MCF 10A (cell line): ENCODE measurements at regions of chr5 and their contacts with region 1.

Region 1: GRCh38 chr5:149128023-149128875 is 13.0 kb upstream of the ABLIM3 start:
- DNase-seq: peak; percentile 80
- H3K4me3 Mint-ChIP-seq: peak overlapping the region; percentile 67
- H3K27ac Mint-ChIP-seq: peak overlapping the region; percentile 84
- H3K4me1 Mint-ChIP-seq: peaks cover 73% of the 10 kb centered on the region
- H3K27me3 Mint-ChIP-seq: no peaks in the 10 kb centered on the region
- CTCF ChIP-seq: peak; percentile 87

Region 2: GRCh38 chr5:148979104-148979723 is 149.0 kb before region 1 on chr5:
- CTCF ChIA-PET with region 1: interaction called, 6 read pairs
- POLR2A ChIA-PET with region 1: interaction called, 10 read pairs
- intact Hi-C with region 1: no loop called
- DNase-seq: peak; percentile 95
- H3K4me3 Mint-ChIP-seq: peak overlapping the region; percentile 59
- H3K27ac Mint-ChIP-seq: peak overlapping the region; percentile 97
- H3K4me1 Mint-ChIP-seq: peaks cover 70% of the 10 kb centered on the region
- H3K27me3 Mint-ChIP-seq: no peaks in the 10 kb centered on the region
- CTCF ChIP-seq: no peak

Region 3: GRCh38 chr5:149063017-149063687 is 65.1 kb before region 1 on chr5 and contains the start of gene SH3TC2:
- CTCF ChIA-PET with region 1: interaction called, 11 read pairs
- POLR2A ChIA-PET with region 1: interaction called, 4 read pairs
- intact Hi-C with region 1: no loop called
- DNase-seq: peak; percentile 60
- H3K4me3 Mint-ChIP-seq: peak within 1 kb of the TSS; percentile 61
- H3K27ac Mint-ChIP-seq: peak within 1 kb of the TSS; percentile 97
- H3K4me1 Mint-ChIP-seq: peaks cover 66% of the 10 kb centered on the region
- H3K27me3 Mint-ChIP-seq: no peaks in the 10 kb centered on the region
- CTCF ChIP-seq: no peak
- total RNA-seq, gene SH3TC2: 6.2 and 7.2 TPM in 2 replicates

Region 4: GRCh38 chr5:149141224-149141956 is 13.1 kb after region 1 on chr5 and contains the start of gene ABLIM3:
- CTCF ChIA-PET with region 1: interaction called, 94 read pairs
- POLR2A ChIA-PET with region 1: interaction called, 114 read pairs
- intact Hi-C with region 1: no loop called
- DNase-seq: peak; percentile 85
- H3K4me3 Mint-ChIP-seq: peak within 1 kb of the TSS; percentile 82
- H3K27ac Mint-ChIP-seq: peak within 1 kb of the TSS; percentile 78
- H3K4me1 Mint-ChIP-seq: peaks cover 51% of the 10 kb centered on the region
- H3K27me3 Mint-ChIP-seq: no peaks in the 10 kb centered on the region
- CTCF ChIP-seq: peak; percentile 99
- total RNA-seq, gene ABLIM3: 168 and 206 TPM in 2 replicates

Region 5: GRCh38 chr5:149162401-149163084 is 34.3 kb after region 1 on chr5:
- CTCF ChIA-PET with region 1: interaction called, 24 read pairs
- POLR2A ChIA-PET with region 1: interaction called, 5 read pairs
- intact Hi-C with region 1: no loop called
- DNase-seq: peak; percentile 77
- H3K4me3 Mint-ChIP-seq: no peak overlapping the region
- H3K27ac Mint-ChIP-seq: peak overlapping the region; percentile 83
- H3K4me1 Mint-ChIP-seq: peaks cover 69% of the 10 kb centered on the region
- H3K27me3 Mint-ChIP-seq: no peaks in the 10 kb centered on the region
- CTCF ChIP-seq: no peak

Region 6: DNA sequence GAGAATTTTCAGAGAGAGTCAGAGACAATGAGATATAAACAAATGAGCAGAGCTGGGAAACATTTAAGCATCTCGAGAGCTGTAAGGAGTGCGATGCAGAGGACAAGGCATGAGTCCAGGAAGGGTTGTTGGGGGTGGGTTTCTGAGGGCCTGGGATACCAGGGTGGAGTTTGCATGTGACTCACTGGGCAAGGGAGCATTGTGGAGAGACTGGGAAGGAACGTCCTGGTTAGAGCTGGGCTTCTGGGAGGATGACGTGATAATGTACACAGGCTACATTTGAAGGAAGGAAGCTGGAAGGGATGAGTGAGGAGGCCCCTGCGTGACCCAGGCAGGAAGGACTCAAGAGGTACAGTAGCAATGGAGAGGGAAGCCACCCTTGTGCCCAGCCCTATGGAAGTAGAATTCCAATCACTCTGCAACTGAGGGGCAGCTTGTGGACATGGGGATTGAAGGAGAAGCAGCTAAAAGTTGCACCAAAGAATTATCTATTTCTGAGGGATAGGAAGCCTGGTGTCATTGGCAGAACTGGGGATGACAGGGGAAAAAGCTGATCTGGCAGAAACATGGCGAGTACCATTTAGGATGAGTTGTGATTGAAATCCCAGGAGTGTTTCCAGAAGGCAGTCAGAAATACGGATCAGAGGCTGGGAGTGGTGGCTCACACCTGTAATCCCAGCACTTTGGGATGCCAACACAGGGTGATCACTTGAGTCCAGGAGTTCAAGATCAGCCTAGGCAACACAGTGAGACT is 84.1 kb after region 1 on chr5:
- CTCF ChIA-PET with region 1: interaction called, 426 read pairs
- POLR2A ChIA-PET with region 1: interaction called, 3 read pairs
- intact Hi-C with region 1: no loop called
- DNase-seq: no peak
- H3K4me3 Mint-ChIP-seq: no peak overlapping the region
- H3K27ac Mint-ChIP-seq: peak overlapping the region; percentile 10
- H3K4me1 Mint-ChIP-seq: peaks cover 7% of the 10 kb centered on the region
- H3K27me3 Mint-ChIP-seq: no peaks in the 10 kb centered on the region
- CTCF ChIP-seq: no peak

Region 7: GRCh38 chr5:149268928-149269557 is 140.8 kb after region 1 on chr5:
- CTCF ChIA-PET with region 1: interaction called, 48 read pairs
- POLR2A ChIA-PET with region 1: interaction called, 11 read pairs
- intact Hi-C with region 1: loop called (anchors 1 kb)
- DNase-seq: peak; percentile 84
- H3K4me3 Mint-ChIP-seq: no peak overlapping the region
- H3K27ac Mint-ChIP-seq: no peak overlapping the region
- H3K4me1 Mint-ChIP-seq: peaks cover 14% of the 10 kb centered on the region
- H3K27me3 Mint-ChIP-seq: no peaks in the 10 kb centered on the region
- CTCF ChIP-seq: peak; percentile 91